ENCODE measurements at regions of chr11 and their contacts with region 1.

Region 1: DNA sequence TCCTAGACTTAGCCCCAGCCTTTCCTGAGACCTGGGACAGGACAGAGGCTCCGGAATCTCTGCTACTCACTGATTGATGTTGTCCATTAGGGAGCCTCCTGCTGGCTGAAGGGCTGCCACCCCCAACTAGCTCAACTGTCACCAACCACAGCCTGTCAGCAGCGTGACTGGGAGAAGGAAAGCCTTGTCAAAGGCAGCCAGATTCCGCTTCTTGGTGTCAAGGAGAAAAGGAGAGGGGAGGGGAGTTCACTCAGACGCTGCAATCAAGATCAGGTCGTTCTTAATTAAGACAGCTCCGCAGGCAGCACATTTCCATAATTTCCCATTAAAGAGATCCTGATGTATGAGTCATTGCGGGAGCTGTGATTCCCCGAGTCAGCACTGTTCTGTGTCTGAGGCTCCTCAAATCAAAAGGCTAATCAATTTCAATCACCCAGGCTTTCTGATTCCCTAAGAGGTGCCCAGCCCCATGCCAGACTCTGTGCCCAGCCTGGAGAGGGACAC is 152.8 kb upstream of the ZBED5 start:
- DNase-seq: peak in 4 of 5 donors; percentile 38 to 57 (median 44)
- ATAC-seq: peak; percentile 55 to 93 (median 90)
- H3K4me3 ChIP-seq: no peak overlapping the region
- H3K27ac ChIP-seq: no peak overlapping the region
- H3K4me1 ChIP-seq: peaks cover 0 to 6% (median 0%) of the 10 kb centered on the region in 12 donors
- H3K27me3 ChIP-seq: peaks cover 0 to 20% (median 0%) of the 10 kb centered on the region in 9 donors
- CTCF ChIP-seq: peak; percentile 13 to 62 (median 42)
- POLR2A ChIP-seq: no peak

Region 2: GRCh38 chr11:10933455-10934292 is 77.0 kb before region 1 on chr11:
- intact Hi-C with region 1: loop called in 4 of 10 experiments (anchors 2 to 5 kb)
- DNase-seq: peak; percentile 88 to 93 (median 91)
- ATAC-seq: peak; percentile 83 to 95 (median 92)
- H3K4me3 ChIP-seq: peak overlapping the region in 11 of 12 donors; percentile 27 to 60 (median 50)
- H3K27ac ChIP-seq: peak overlapping the region in 11 of 12 donors; percentile 30 to 84 (median 73)
- H3K4me1 ChIP-seq: peaks cover 0 to 24% (median 6%) of the 10 kb centered on the region in 12 donors
- H3K27me3 ChIP-seq: peaks cover 0 to 12% (median 0%) of the 10 kb centered on the region in 9 donors
- CTCF ChIP-seq: peak; percentile 88 to 99 (median 96)
- POLR2A ChIP-seq: peak in 1 of 2 donors; percentile 30

Region 3: DNA sequence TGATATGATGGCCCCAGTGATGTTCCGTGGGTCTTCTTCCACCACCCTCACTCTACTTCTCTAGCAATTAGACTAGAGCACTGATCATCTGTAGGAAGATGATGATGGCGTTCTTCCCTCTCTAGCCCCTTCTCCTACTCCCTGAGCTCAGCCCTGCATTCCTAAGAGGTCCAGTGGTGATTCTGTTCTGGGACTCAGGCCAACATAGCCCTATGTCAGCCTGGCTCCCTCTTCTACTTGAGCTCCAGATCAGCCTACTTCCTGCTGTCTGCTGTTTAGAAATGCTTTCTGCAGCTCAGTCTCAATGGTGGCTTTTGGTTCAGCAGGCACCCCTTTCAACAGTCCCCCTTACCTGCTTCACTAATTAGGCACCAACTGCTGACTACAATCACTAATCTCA is 66.7 kb before region 1 on chr11:
- intact Hi-C with region 1: loop called in 3 of 10 experiments (anchors 5 kb)
- DNase-seq: no peak
- ATAC-seq: peak in 1 of 4 donors; percentile 63
- H3K4me3 ChIP-seq: no peak overlapping the region
- H3K27ac ChIP-seq: no peak overlapping the region
- H3K4me1 ChIP-seq: peaks cover 0 to 12% (median 0%) of the 10 kb centered on the region in 12 donors
- H3K27me3 ChIP-seq: no peaks in the 10 kb centered on the region
- CTCF ChIP-seq: no peak
- POLR2A ChIP-seq: no peak

Region 4: DNA sequence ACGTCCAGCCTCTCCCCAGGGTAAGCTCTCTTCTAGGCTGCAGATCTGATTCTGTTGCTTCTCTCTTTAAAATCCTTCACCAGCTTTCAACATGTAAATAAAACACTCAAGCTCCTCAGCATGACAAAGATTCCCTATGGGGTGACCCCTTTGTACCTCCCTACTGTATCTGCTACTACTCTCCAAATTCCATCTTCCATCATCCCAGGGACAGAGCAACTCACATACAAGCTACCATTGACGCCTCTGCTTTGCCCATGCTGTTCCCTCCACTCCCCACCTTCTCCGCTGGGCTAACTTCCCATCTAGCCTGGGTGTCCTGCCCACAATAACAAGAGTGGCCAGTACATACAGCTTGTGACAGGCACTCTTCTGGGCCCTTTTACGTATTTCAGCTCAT is 54.7 kb after region 1 on chr11:
- intact Hi-C with region 1: no loop called
- DNase-seq: no peak
- ATAC-seq: no peak
- H3K4me3 ChIP-seq: no peak overlapping the region
- H3K27ac ChIP-seq: no peak overlapping the region
- H3K4me1 ChIP-seq: no peaks in the 10 kb centered on the region
- H3K27me3 ChIP-seq: no peaks in the 10 kb centered on the region
- CTCF ChIP-seq: no peak
- POLR2A ChIP-seq: no peak